Activated T-helper 2 cell treated with anti-CD3 and anti-CD28 coated beads, Interferon-gamma antibody, Interleukin-2, Interleukin-4, amounts not matched to agents 10 μg/mL and 5 μg/mL and 100 μg/mL, durations not matched to agents 14 hours and 24 hours and 36 hours (primary cell): ENCODE measurements at regions of chr18 and their contacts with region 1.

Region 1: DNA sequence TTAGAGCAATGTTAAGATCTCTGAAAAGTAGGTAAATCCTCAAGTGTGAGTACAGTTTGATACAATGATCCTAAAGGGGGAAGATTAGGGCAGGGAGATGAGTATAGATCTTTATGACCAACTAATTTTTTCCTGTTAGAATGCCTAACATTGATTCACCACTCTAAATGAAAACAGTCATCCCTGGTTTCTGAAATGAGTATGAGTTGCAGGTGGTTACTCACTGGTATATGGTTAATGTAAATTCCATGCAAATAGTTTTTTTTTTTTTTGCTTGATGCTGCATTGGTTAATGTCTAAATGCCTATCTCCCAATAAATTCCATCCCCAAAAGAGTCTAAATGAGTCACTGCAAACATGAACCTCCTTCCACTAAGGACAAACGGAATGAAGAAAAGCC is 55.0 kb upstream of the SERPINB2 start:
- DNase-seq: no peak
- H3K4me3 Mint-ChIP-seq: no peak overlapping the region
- H3K27ac Mint-ChIP-seq: no peak overlapping the region
- H3K4me1 Mint-ChIP-seq: peaks cover 24% of the 10 kb centered on the region
- H3K27me3 Mint-ChIP-seq: peaks cover 41% of the 10 kb centered on the region

Region 2: GRCh38 chr18:63795614-63796013 is 36.9 kb before region 1 on chr18:
- intact Hi-C with region 1: no loop called
- DNase-seq: no peak
- H3K4me3 Mint-ChIP-seq: no peak overlapping the region
- H3K27ac Mint-ChIP-seq: no peak overlapping the region
- H3K4me1 Mint-ChIP-seq: no peaks in the 10 kb centered on the region
- H3K27me3 Mint-ChIP-seq: no peaks in the 10 kb centered on the region

Region 3: GRCh38 chr18:63882333-63883141 is 50.1 kb after region 1 on chr18:
- intact Hi-C with region 1: loop called (anchors 2 kb)
- DNase-seq: no peak
- H3K4me3 Mint-ChIP-seq: no peak overlapping the region
- H3K27ac Mint-ChIP-seq: no peak overlapping the region
- H3K4me1 Mint-ChIP-seq: peaks cover 13% of the 10 kb centered on the region
- H3K27me3 Mint-ChIP-seq: peaks cover 6% of the 10 kb centered on the region